Prostate gland (tissue), 2 donors: ENCODE measurements at regions of chr7 and their contacts with region 1.

Region 1: GRCh38 chr7:44748045-44748947 is at the start of gene ZMIZ2:
- DNase-seq: peak; percentile 94
- H3K4me3 ChIP-seq: peak within 1 kb of the TSS; percentile 80 to 91
- H3K27ac ChIP-seq: peak within 1 kb of the TSS; percentile 94 to 96
- H3K4me1 ChIP-seq: peaks cover 3% of the 10 kb centered on the region
- H3K27me3 ChIP-seq: no peaks in the 10 kb centered on the region
- CTCF ChIP-seq: no peak
- POLR2A ChIP-seq: peak; percentile 51
- total RNA-seq, gene ZMIZ2: 27.1 to 42.8 TPM

Region 2: GRCh38 chr7:44431091-44431608 is 317.1 kb before region 1 on chr7:
- intact Hi-C with region 1: no loop called
- DNase-seq: no peak
- H3K4me3 ChIP-seq: no peak overlapping the region
- H3K27ac ChIP-seq: no peak overlapping the region
- H3K4me1 ChIP-seq: no peaks in the 10 kb centered on the region
- H3K27me3 ChIP-seq: no peaks in the 10 kb centered on the region
- CTCF ChIP-seq: no peak
- POLR2A ChIP-seq: no peak

Region 3: GRCh38 chr7:44695381-44696155 is 52.7 kb before region 1 on chr7:
- intact Hi-C with region 1: no loop called
- DNase-seq: no peak
- H3K4me3 ChIP-seq: no peak overlapping the region
- H3K27ac ChIP-seq: no peak overlapping the region
- H3K4me1 ChIP-seq: no peaks in the 10 kb centered on the region
- H3K27me3 ChIP-seq: no peaks in the 10 kb centered on the region
- CTCF ChIP-seq: no peak
- POLR2A ChIP-seq: no peak

Region 4: GRCh38 chr7:44797329-44798251 is 49.3 kb after region 1 on chr7:
- intact Hi-C with region 1: loop called (anchors 1 kb)
- DNase-seq: peak; percentile 92
- H3K4me3 ChIP-seq: peak overlapping the region; percentile 91 to 94
- H3K27ac ChIP-seq: peak overlapping the region; percentile 100
- H3K4me1 ChIP-seq: peaks cover 3% of the 10 kb centered on the region
- H3K27me3 ChIP-seq: no peaks in the 10 kb centered on the region
- CTCF ChIP-seq: peak; percentile 19 to 58 (median 43)
- POLR2A ChIP-seq: peak; percentile 70

Region 5: DNA sequence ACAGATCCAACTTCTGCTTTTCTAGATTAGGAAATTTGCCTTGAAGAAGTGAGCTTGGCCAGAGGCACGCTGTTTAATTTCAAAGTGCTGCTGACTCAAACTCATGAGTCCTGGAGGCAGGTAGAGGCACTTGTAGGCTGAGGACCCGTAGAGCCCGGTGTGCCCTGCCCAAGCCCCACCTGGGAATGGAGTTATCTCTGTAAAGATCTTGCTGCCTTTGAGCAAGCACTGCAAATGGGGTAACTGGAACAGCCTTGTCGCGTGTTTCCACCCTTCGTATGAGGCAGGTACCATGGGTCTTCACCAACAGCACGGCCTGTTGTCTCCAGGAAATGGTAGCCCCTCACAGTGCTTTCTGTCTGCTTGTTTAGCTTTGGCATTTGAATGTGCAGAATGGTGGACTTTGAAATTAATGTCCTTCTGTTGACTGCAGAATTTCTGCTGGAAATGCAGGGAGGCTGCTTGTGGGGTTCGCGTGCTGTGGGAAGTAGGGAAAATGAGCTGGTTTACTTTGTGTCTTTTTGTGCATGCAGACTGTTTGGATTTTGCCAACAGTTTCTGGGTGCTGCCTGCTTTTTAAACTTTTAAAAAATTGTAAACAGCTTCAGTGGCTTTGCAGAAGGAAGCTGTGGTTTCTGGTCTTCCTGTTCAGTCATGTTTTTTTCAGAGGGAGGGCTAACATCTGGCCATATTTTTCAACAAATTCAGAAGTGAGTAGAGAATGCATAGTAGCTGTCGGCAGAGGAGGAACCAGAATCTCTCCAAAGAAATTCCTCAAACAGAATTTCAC is 278.9 kb after region 1 on chr7:
- intact Hi-C with region 1: no loop called
- DNase-seq: no peak
- H3K4me3 ChIP-seq: peak overlapping the region; percentile 6 to 7
- H3K27ac ChIP-seq: no peak overlapping the region
- H3K4me1 ChIP-seq: no peaks in the 10 kb centered on the region
- H3K27me3 ChIP-seq: no peaks in the 10 kb centered on the region
- CTCF ChIP-seq: no peak
- POLR2A ChIP-seq: no peak